ENCODE measurements at regions of chr2 and their contacts with region 1.

Region 1: GRCh38 chr2:164841719-164842623 is at the start of gene COBLL1:
- DNase-seq: peak; percentile 73
- ATAC-seq: peak; percentile 83 to 86
- total RNA-seq, gene COBLL1: 13.9 to 18.0 TPM

Region 2: DNA sequence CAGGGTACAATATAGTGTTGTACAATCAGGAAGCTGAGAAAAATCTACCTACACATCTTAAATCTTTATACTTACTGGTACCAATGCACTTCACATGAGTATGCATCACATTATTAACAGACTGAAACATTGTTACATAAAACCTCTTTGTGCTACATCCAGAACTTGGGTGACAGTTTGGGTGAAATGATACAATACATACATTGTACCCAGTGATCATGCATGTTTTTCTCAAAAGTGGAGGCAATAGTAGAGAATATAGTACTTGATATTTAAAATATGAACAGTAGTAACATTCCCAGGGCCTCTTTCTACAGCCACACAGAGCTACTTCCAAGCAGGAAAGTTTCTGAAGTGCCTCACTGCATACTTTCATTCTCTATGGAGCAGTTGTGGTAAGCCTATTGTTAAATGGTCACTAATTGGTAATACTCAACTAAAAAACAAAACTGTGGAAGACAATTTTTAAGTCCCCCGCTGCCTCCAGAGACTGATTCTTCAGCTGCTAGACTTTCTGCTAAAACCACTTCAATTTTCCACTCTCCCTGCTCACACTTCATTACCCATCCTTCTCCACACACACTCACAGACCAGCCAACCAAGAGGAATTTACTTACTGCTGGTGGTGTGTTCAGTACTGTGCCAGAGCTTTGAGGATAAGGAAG is 197.8 kb before region 1 on chr2:
- intact Hi-C with region 1: no loop called
- DNase-seq: no peak
- ATAC-seq: no peak

Region 3: DNA sequence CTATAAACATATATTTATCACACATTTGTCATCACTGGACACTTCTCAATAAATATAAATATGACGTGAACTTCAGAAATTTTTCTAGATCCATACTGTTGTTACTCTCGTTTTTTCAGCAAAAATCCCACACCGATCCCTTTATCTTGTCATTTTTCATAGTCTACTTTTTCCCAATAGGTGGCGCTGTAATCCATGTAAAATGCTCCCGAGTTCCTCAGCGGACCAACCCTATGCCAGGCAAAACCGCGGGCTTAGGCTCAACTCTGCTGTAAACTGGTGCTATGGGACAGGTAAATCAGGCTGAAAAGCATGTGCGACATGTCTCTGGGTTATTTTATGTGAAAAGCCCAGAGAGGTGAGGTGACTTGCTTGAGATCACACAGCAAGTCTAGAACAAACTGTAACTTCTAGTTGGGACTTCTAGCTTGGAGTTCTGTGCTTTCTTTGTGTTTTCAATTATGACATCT is 104.3 kb before region 1 on chr2:
- intact Hi-C with region 1: loop called in 1 of 2 experiments (anchors 5 kb)
- DNase-seq: peak; percentile 50
- ATAC-seq: peak; percentile 71 to 78

Region 4: DNA sequence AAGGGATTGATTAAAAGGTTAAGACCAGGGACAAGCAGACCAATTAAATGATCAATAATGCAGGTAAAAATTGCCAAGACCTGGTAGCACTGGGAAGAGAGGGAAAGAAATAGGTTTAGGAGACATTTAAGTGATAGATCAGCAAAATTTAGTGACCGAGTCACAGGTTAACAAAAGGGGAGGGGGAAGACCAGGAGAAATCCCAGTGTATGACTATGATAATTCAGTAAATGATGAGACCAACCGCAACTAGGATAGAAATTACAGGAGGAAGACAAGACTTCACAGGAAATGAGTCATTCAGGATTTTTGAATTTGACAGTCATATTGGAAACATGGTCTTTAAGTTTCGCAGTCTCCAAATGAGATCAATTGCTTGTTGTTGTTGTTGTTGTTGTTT is 63.2 kb before region 1 on chr2:
- intact Hi-C with region 1: loop called in 1 of 2 experiments (anchors 10 kb)
- DNase-seq: no peak
- ATAC-seq: no peak

Region 5: GRCh38 chr2:164910101-164910899 is 68.3 kb after region 1 on chr2:
- intact Hi-C with region 1: loop called (anchors 5 to 10 kb)
- DNase-seq: no peak
- ATAC-seq: peak in 1 of 2 donors; percentile 59

Region 6: GRCh38 chr2:164917296-164917903 is 75.4 kb after region 1 on chr2:
- intact Hi-C with region 1: loop called (anchors 5 to 10 kb)
- DNase-seq: peak; percentile 24
- ATAC-seq: peak; percentile 57 to 59